ENCODE measurements at regions of chr1 and their contacts with region 1.

Region 1: DNA sequence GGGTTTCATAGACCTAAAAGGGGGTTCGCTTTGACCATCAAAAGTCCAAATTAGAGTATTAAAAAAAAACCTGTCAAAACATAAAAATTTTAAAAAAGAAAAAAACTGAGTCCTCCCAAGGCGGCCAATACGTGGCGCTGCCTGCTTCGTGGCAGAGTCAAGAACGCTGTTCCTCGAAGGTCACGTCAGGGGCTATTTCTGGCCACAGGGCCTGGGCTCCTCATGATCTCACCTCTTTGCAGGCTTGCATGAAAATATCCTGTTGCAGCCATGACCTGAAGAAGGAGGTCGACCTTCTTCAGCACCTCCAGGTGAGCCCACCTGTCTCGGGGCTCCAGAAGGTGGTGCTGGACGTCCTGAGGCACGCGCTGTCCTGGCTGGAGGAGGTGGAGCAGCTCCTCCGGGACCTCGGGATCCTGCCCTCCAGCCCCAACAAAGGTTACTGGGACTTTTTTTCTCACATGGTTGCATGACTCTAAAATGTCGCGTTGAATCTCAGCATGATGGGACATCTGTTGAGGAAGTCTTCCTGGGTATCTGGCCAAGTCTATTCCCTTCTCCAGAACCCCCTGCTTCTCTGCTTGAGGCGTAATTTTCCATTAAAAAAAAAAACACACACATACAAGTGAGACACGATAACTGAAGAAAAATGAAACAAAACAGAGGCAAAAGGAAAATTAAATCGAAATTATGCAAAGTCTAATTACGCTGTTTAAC is 80.4 kb upstream of the EFHD2 start:
- DNase-seq: no peak
- H3K27ac ChIP-seq: no peak overlapping the region
- CTCF ChIP-seq: no peak

Region 2: GRCh38 chr1:15064217-15064929 is 264.9 kb before region 1 on chr1:
- CTCF ChIA-PET with region 1: no interaction called
- POLR2A ChIA-PET with region 1: no interaction called
- DNase-seq: peak; percentile 61
- H3K27ac ChIP-seq: no peak overlapping the region
- CTCF ChIP-seq: 0 out of 2 replicates have a peak, but pooled peaks have one; percentile 15

Region 3: GRCh38 chr1:15311880-15312279 is 17.4 kb before region 1 on chr1:
- CTCF ChIA-PET with region 1: no interaction called
- POLR2A ChIA-PET with region 1: interaction called, 11 read pairs
- DNase-seq: no peak
- H3K27ac ChIP-seq: no peak overlapping the region
- CTCF ChIP-seq: no peak

Region 4: DNA sequence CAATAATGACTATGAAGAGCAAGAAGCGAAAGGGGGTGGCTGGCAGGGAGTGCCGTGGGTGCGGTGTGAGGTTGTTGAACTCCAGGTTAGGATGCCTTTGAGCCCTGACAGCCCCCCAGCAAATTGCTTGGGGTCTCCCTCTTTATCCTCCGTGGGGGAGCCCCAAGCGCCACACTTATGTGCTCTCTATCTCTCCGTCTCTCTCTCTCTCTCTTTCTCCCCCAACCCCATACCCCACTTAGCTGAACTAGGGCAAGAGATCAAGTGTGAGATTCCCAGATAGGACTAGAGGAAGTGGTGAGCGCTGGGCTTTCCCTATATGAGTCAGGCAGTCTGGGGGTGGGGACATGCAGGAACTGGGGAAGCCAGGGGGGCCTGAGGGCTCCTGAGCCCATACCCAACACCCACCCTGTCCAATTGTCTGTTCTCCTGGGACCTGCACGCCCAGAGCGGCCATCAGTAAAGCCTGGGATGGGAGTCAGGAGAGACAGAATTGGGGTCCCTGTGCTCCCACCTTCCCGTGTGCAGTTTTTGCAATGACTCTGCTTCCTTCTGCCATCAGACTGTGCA is 88.2 kb after region 1 on chr1:
- CTCF ChIA-PET with region 1: no interaction called
- POLR2A ChIA-PET with region 1: no interaction called
- DNase-seq: peak; percentile 80
- H3K27ac ChIP-seq: peak overlapping the region; percentile 93
- CTCF ChIP-seq: no peak

Measured in RWPE1 (cell line).